Prostate gland (tissue), 2 donors: ENCODE measurements at regions of chr9 and their contacts with region 1.

Region 1: DNA sequence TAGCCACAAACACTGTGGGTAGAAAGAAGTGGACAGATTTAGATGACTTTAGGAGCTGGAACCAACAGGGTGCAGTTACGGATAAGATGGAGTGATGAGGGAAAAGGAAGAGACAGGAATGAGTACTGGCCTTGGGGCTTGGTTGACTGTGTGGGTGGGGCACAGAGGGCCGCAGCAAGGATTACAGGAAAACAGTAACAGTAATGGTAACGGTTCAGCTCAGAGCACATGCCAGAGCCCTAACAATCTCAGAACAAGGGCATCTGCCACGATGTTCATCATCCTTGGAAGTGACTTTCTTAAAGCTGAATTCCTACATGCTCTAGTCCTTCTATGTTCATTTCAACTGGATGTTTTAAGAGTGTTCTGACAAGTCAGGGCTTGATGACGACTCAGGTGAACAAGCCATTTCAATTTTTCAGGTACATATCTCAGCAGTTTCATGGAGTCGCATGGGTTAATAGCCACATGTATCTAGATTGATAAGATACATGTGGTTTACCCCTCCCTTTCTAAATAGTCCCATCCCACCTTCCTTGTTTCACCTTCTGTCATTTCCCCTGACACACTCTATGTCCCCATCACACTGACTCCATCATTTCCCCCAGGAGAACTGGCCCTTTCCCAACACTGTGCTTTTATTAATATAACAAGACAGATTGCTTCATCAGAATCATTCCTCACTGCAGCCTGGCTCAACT is 65.0 kb downstream of the CEMIP2 start:
- DNase-seq: no peak
- H3K4me3 ChIP-seq: no peak overlapping the region
- H3K27ac ChIP-seq: no peak overlapping the region
- H3K4me1 ChIP-seq: no peaks in the 10 kb centered on the region
- H3K27me3 ChIP-seq: no peaks in the 10 kb centered on the region
- CTCF ChIP-seq: no peak
- POLR2A ChIP-seq: no peak

Region 2: GRCh38 chr9:71680189-71680980 is 22.9 kb before region 1 on chr9:
- intact Hi-C with region 1: loop called (anchors 2 kb)
- DNase-seq: no peak
- H3K4me3 ChIP-seq: no peak overlapping the region
- H3K27ac ChIP-seq: no peak overlapping the region
- H3K4me1 ChIP-seq: no peaks in the 10 kb centered on the region
- H3K27me3 ChIP-seq: no peaks in the 10 kb centered on the region
- CTCF ChIP-seq: no peak
- POLR2A ChIP-seq: no peak